Heart right ventricle (tissue), 16 donors: ENCODE measurements at regions of chr3 and their contacts with region 1.

Region 1: DNA sequence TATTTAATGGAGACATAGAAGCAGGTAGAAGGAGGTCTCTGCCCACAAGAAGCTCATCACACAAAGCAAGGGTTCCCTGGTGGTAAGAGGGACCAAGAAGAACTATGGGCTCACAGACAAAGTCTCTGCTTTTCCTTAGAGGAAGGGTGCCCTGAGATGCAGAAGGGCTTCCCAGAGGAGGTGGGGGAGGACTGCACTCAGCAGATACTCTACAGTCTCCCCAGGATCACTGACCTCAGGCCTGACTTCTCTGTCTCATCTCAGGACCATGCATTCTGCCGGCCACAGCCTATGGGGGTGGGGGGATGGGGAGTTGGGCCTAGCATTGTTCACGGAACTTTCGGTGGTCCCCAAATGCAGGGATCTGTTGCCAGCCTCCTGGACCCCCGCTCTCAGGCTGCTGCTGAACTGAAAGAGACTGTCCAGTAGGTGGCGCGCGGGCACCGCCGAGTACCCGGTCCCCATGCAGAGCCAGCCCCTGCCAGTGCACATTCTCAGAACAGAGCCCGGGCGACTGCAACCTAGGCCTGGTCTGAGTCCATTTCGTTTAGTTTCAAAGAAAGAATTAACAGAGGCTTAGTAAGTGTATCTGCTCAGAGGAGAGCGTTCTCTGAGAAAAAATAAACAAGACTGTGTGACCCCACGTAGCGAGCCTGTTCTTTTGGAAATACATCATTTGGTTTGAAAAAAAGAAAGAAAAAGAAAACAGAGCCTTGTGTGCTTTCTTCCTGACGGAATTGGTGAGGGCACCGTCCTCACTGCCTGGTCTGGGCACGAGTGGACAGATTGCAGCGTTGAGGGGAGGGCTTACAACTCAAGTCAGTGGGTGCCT is 74.1 kb downstream of the LRTM1 start:
- DNase-seq: peak; percentile 72 to 79
- ATAC-seq: peak; percentile 78 to 92 (median 90)
- H3K4me3 ChIP-seq: no peak overlapping the region
- H3K27ac ChIP-seq: no peak overlapping the region
- H3K4me1 ChIP-seq: peaks cover 0 to 4% (median 0%) of the 10 kb centered on the region in 9 donors
- H3K27me3 ChIP-seq: no peaks in the 10 kb centered on the region
- CTCF ChIP-seq: peak; percentile 67 to 89 (median 87)

Region 2: DNA sequence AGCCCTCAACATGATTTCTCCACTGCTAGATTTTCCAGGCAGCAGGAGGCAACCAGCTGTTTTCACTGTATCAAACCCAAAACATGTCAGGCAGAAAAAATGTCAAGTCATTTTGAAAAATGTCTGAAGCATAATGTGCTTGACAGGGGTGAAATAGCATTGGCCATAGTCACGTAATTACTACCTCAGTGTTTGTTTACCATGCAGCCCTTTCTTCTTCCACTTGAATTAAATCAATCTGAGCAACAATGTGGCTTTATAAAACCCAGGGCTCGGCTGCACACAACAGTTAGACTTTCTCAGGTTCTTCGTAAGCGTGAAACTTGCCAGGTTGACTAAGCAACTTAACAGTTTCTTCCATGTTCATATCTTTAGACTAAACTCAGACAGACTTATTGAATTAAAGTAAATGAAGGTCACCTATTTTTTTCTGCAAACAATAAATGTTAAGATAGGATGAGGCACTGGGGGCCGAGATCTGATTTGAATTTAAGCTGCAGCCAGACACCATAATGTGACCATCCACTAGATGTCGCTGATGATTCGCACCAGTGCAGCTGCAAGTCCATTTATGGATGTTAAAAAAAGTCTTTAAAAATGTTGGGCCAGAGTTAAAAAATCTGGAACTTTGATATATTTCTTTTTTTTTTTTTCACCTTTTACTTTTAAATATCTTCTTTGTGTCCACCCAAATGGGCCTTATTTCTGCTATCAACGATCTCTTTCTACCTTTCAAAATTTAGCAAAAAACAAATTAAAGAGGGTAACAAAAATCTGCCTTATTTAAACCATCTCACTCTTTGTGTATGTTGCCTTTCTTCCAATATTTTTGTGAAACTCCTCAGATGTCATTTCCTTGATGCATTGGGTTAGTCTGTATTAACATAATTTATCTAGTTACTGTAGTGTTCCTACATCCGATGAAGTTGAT is 425.6 kb before region 1 on chr3:
- intact Hi-C with region 1: loop called in 4 of 10 experiments (anchors 5 to 10 kb)
- DNase-seq: peak in 1 of 2 donors; percentile 48
- ATAC-seq: peak in 2 of 8 donors; percentile 46 to 61
- H3K4me3 ChIP-seq: no peak overlapping the region
- H3K27ac ChIP-seq: no peak overlapping the region
- H3K4me1 ChIP-seq: no peaks in the 10 kb centered on the region
- H3K27me3 ChIP-seq: no peaks in the 10 kb centered on the region
- CTCF ChIP-seq: peak; percentile 53 to 85 (median 81)

Region 3: GRCh38 chr3:55169608-55170010 is 315.8 kb after region 1 on chr3:
- intact Hi-C with region 1: loop called in 1 of 10 experiments (anchors 10 kb)
- DNase-seq: no peak
- ATAC-seq: no peak
- H3K4me3 ChIP-seq: no peak overlapping the region
- H3K27ac ChIP-seq: no peak overlapping the region
- H3K4me1 ChIP-seq: no peaks in the 10 kb centered on the region
- H3K27me3 ChIP-seq: peaks cover 0 to 16% (median 0%) of the 10 kb centered on the region in 7 donors
- CTCF ChIP-seq: no peak

Region 4: GRCh38 chr3:55467099-55467498 is 613.3 kb after region 1 on chr3:
- intact Hi-C with region 1: no loop called
- DNase-seq: no peak
- ATAC-seq: no peak
- H3K4me3 ChIP-seq: no peak overlapping the region
- H3K27ac ChIP-seq: no peak overlapping the region
- H3K4me1 ChIP-seq: peaks cover 0 to 6% (median 0%) of the 10 kb centered on the region in 9 donors
- H3K27me3 ChIP-seq: no peaks in the 10 kb centered on the region
- CTCF ChIP-seq: no peak

Region 5: DNA sequence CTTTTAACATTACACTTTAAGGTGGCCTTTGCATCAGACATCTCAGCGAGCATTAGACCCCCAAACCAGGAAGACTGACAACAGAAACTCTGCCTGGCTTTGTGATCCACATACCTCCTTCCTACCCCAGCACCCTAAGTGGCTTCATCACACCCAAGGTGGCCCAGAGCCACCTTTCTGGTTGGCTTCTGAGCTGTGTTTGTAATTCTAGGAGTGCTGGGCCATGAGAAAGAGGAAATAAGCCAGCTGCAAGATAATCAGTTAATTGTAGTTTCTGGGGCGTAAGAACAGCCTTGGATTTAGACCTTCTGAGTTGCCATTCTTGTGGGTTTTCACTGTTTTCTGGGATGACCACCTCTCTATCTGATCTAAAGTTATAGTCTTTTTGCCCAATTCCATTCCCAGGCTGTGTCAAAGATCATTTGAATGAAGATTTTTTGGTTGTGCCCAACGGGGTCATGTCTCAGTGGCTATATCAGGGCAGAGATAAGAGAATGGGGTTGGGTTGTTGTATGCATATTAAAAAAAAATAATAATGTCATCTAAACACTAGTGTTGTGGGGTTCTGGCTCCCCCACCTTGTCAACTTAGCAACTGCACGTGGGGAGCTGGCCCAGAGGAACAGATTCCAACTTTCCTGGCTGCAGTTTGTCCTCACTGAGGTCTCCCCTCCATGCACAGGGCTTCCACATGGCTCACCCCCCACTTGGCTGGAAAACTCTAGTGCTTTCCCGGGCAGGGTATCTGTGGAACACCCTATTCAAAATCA is 868.1 kb after region 1 on chr3:
- intact Hi-C with region 1: loop called in 1 of 10 experiments (anchors 10 kb)
- DNase-seq: peak in 1 of 2 donors; percentile 12
- ATAC-seq: peak in 2 of 8 donors; percentile 17 to 52
- H3K4me3 ChIP-seq: no peak overlapping the region
- H3K27ac ChIP-seq: no peak overlapping the region
- H3K4me1 ChIP-seq: peaks cover 0 to 7% (median 0%) of the 10 kb centered on the region in 9 donors
- H3K27me3 ChIP-seq: peaks cover 0 to 41% (median 11%) of the 10 kb centered on the region in 7 donors
- CTCF ChIP-seq: peak in 7 of 9 donors; percentile 33 to 57 (median 48)

Region 6: GRCh38 chr3:56238299-56238698 is 1384.5 kb after region 1 on chr3:
- intact Hi-C with region 1: loop called in 1 of 10 experiments (anchors 10 kb)
- DNase-seq: no peak
- ATAC-seq: no peak
- H3K4me3 ChIP-seq: no peak overlapping the region
- H3K27ac ChIP-seq: no peak overlapping the region
- H3K4me1 ChIP-seq: no peaks in the 10 kb centered on the region
- H3K27me3 ChIP-seq: no peaks in the 10 kb centered on the region
- CTCF ChIP-seq: no peak